ENCODE measurements at regions of chr1 and their contacts with region 1.

Region 1: GRCh38 chr1:24391882-24392603 is 21.5 kb downstream of the STPG1 start:
- DNase-seq: peak; percentile 80
- ATAC-seq: peak; percentile 73
- H3K4me3 Mint-ChIP-seq: peak overlapping the region; percentile 65
- H3K27ac Mint-ChIP-seq: peak overlapping the region; percentile 95
- H3K4me1 Mint-ChIP-seq: peaks cover 27% of the 10 kb centered on the region
- H3K27me3 Mint-ChIP-seq: no peaks in the 10 kb centered on the region

Region 2: GRCh38 chr1:24201941-24202440 is 190.1 kb before region 1 on chr1:
- CTCF ChIA-PET with region 1: interaction called, 509 read pairs
- DNase-seq: peak; percentile 71
- ATAC-seq: no peak
- H3K4me3 Mint-ChIP-seq: no peak overlapping the region
- H3K27ac Mint-ChIP-seq: no peak overlapping the region
- H3K4me1 Mint-ChIP-seq: peaks cover 23% of the 10 kb centered on the region
- H3K27me3 Mint-ChIP-seq: peaks cover 5% of the 10 kb centered on the region

Region 3: GRCh38 chr1:24321697-24322469 is 70.2 kb before region 1 on chr1:
- CTCF ChIA-PET with region 1: interaction called, 35 read pairs
- DNase-seq: peak; percentile 84
- ATAC-seq: peak; percentile 69
- H3K4me3 Mint-ChIP-seq: peak overlapping the region; percentile 53
- H3K27ac Mint-ChIP-seq: peak overlapping the region; percentile 72
- H3K4me1 Mint-ChIP-seq: peaks cover 44% of the 10 kb centered on the region
- H3K27me3 Mint-ChIP-seq: peaks cover 94% of the 10 kb centered on the region

Region 4: DNA sequence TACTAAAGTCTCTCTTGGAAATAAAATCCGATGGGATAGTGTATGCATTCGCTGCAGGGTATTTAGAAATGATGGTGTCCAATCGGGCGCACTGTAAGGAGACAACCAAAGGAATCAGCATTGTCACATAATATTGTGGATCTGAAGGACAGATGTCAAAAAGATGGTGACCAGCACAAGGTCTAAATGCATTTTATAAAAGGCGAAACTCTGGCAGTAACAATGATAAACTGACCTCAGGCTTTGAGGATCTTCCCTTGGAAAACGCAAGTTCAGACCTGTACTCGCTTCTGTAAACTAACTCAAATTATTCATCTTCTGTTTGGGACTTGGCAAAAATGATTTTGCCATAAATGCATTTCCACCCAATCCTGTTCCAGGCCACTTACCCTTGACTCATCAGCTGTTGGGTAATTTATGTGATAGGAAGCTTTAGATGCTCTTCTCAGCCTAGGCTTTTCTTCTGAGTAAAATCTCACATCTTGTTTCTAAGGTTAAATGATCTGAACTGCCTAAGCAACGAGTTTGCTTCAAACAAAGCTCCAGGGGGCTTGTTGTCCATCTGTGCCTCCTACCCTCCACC is 12.2 kb before region 1 on chr1:
- CTCF ChIA-PET with region 1: interaction called, 13 read pairs
- DNase-seq: no peak
- ATAC-seq: no peak
- H3K4me3 Mint-ChIP-seq: no peak overlapping the region
- H3K27ac Mint-ChIP-seq: no peak overlapping the region
- H3K4me1 Mint-ChIP-seq: peaks cover 12% of the 10 kb centered on the region
- H3K27me3 Mint-ChIP-seq: no peaks in the 10 kb centered on the region

Region 5: DNA sequence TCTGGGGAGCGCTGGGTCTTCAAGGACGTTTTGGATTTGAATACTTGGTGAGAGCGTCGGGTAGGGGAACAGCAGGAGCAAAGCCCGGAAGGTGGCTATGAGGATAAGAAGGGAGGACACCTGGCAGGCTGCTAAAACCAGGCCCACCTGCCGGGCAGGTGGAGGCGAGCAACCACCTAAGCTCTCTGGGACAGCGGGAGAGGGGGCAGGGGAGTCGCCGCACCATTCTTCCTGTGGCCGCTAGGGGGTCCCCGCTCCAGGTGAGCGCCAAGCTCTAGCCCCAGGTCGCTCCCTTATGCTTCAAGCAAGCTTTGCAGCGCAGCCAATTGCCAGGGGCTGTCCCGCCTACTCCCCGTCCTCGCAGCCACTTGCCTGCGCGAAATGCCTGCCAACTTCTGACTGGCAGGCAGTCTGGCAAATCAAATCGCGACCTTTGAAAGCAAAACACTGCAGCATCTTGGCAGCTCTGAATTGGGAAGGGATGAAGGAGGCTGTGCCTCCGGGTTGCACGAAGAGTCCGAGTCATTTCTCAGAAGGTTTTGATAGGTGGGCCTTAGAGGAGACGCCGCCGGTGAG is 23.4 kb after region 1 on chr1 and contains the start of gene NIPAL3:
- CTCF ChIA-PET with region 1: interaction called, 41 read pairs
- DNase-seq: peak; percentile 100
- ATAC-seq: peak; percentile 97
- H3K4me3 Mint-ChIP-seq: peak within 1 kb of the TSS; percentile 90
- H3K27ac Mint-ChIP-seq: peak within 1 kb of the TSS; percentile 87
- H3K4me1 Mint-ChIP-seq: peaks cover 53% of the 10 kb centered on the region
- H3K27me3 Mint-ChIP-seq: no peaks in the 10 kb centered on the region
- total RNA-seq, gene NIPAL3: 35.4 to 44.2 TPM

Region 6: DNA sequence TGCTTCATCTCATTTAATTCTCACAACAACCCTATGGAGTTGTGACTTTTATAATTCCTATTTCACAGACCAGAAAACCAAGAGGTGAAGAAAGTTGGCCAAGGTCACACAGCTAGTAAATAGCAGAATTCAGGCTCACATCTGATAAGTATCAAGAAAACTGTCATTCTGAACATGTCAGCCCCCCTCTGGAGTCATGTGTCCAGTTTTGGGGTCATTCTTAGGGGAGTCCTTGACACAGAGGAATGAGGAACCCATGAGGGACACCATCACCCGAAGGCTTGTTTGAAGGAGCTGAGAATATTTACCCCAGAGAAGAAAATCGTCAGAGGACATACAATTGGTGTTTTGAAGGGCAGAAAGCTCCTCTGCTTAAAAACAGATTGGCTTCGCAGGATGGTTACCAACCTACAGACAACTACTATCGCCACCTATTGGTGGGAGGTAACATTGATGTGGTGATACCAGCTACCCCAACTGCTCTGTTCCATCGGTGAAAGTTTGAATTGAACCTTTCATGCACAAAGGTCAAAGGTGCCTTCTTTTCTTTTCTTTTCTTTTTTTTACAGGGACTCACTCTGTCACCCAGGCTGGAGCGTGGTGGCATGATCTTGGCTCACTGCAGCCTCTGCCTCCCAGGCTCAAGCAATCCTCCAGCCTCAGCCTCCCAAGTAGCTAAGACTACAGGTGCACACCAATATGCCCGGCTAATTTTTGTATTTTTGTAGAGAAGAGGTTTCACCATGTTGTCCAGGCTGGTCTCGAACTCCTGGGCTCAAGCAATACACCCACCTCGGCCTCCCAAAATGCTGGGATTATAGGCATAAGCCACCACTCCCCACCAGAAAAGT is 195.2 kb after region 1 on chr1:
- CTCF ChIA-PET with region 1: interaction called, 17 read pairs
- DNase-seq: peak; percentile 69
- ATAC-seq: peak; percentile 95
- H3K4me3 Mint-ChIP-seq: no peak overlapping the region
- H3K27ac Mint-ChIP-seq: peak overlapping the region; percentile 12
- H3K4me1 Mint-ChIP-seq: peaks cover 10% of the 10 kb centered on the region
- H3K27me3 Mint-ChIP-seq: peaks cover 7% of the 10 kb centered on the region

Measured in activated CD8-positive, alpha-beta memory T cell treated with anti-CD3 and anti-CD28 coated beads, Interleukin-2, amount 10 ng/mL, durations not matched to agents 7 days and 5 days (primary cell).